AG04450 (cell line): ENCODE measurements at regions of chr10 and their contacts with region 1.

Region 1: GRCh38 chr10:29496341-29497162 is 138.2 kb downstream of the SVIL start:
- DNase-seq: no peak
- H3K4me3 ChIP-seq: no peak overlapping the region
- H3K27ac ChIP-seq: no peak overlapping the region
- H3K27me3 ChIP-seq: no peaks in the 10 kb centered on the region
- CTCF ChIP-seq: peak; percentile 98

Region 2: DNA sequence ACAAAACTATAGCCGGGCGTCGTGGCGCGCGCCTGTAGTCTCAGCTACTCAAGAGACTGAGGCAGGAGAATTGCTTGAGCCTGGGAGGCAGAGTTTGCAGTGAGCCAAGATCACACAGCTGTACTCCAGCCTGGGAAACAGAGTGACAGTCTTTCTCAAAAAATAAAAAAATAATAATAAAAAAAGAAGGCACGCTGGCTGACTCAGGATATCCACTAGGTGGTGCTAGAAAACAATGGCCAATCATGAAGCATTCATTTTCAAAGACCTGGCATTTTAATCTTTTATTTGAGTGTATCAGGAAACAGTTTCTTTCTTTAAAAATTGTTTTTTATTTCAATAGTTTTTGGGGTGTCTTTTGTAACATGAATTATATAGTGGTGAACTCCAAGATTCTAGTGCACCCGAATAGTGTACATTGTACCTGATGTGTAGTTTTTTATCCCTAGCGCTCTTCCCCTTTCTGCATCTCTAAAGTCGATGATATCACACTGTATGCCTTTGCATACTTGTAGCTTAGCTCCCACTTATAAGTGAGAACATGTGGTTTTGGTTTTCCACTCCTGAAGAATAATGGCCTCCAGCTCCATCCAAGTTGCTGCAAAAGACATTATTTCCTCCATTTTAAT is 119.1 kb before region 1 on chr10:
- CTCF ChIA-PET with region 1: interaction called, 13 read pairs
- POLR2A ChIA-PET with region 1: no interaction called
- DNase-seq: peak; percentile 7
- H3K4me3 ChIP-seq: no peak overlapping the region
- H3K27ac ChIP-seq: no peak overlapping the region
- H3K27me3 ChIP-seq: peaks cover 6% of the 10 kb centered on the region
- CTCF ChIP-seq: peak; percentile 81

Region 3: DNA sequence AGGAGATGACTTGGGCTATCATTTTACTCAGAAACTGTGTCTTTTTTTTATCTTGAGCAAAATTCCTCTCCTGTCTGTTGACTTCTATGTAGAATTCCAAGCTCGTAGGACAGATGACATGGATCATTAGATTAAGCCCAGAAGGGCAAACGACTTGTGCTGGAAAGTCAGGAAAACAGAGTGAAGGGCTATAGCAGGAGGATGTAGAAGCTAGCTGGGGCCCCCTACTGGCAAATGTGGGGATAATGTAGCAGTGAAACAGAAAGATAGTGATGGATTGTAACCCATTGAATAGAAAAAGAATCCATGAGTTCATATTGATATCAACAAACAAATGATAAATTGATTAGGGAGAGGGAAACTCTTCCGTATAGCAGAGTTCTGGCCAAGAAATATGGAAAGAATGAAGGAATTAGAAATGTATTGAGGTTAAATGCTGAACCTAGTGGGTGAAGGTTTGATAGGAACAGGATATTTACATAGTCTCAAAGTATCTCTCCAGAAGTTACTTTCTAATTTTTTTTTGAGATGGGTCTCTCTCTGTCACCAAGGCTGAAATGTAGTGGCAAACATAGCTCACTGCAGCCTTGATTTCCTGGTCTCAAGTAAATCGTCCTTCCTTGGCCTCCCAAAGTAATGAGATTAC is 104.1 kb before region 1 on chr10:
- CTCF ChIA-PET with region 1: interaction called, 10 read pairs
- POLR2A ChIA-PET with region 1: no interaction called
- DNase-seq: no peak
- H3K4me3 ChIP-seq: no peak overlapping the region
- H3K27ac ChIP-seq: no peak overlapping the region
- H3K27me3 ChIP-seq: peaks cover 38% of the 10 kb centered on the region
- CTCF ChIP-seq: peak; percentile 90

Region 4: GRCh38 chr10:29486433-29486832 is 10.1 kb before region 1 on chr10:
- CTCF ChIA-PET with region 1: interaction called, 26 read pairs
- POLR2A ChIA-PET with region 1: no interaction called
- DNase-seq: no peak
- H3K4me3 ChIP-seq: no peak overlapping the region
- H3K27ac ChIP-seq: no peak overlapping the region
- H3K27me3 ChIP-seq: no peaks in the 10 kb centered on the region
- CTCF ChIP-seq: no peak

Region 5: DNA sequence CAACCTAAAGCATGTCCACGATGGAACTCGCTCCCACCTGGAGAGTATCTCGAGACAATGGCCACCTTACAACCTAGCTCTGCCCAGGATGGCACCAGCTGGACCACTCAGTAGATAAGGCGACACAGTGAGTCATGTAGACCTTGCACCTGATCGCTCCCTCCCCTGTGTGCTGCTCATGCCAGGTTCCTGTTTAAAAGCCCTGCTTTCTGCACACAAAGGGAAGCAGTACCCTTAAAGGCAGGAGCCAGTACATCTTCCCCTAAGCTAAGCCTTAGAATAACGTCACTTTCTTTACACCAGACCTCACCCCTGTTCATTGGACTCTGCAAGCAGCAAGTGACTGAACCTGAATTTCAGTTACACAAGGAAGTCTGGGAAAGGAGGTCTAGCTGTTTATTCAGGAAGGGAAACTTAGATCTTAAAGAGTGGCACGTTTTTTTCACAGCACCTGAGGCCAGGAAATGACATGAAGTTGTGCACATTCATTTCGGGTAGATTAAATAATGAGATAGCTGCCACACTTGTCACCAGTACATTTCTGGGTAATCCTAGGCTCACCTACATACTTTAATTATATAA is 734.6 kb after region 1 on chr10:
- CTCF ChIA-PET with region 1: interaction called, 12 read pairs
- POLR2A ChIA-PET with region 1: no interaction called
- DNase-seq: no peak
- H3K4me3 ChIP-seq: no peak overlapping the region
- H3K27ac ChIP-seq: no peak overlapping the region
- H3K27me3 ChIP-seq: no peaks in the 10 kb centered on the region
- CTCF ChIP-seq: no peak